ENCODE measurements at regions of chr2 and their contacts with region 1.

Region 1: GRCh38 chr2:43226558-43226954 is at the start of gene ZFP36L2:
- DNase-seq: peak; percentile 95 to 96
- ATAC-seq: peak; percentile 60 to 83 (median 74)
- H3K4me3 ChIP-seq: peak within 1 kb of the TSS; percentile 97
- H3K4me3 Mint-ChIP-seq: peak within 1 kb of the TSS; percentile 98
- H3K27ac ChIP-seq: peak within 1 kb of the TSS; percentile 97
- H3K27ac Mint-ChIP-seq: peak within 1 kb of the TSS; percentile 90 to 99
- H3K4me1 ChIP-seq: peaks cover 32% of the 10 kb centered on the region
- H3K4me1 Mint-ChIP-seq: peaks cover 44 to 50% of the 10 kb centered on the region in 2 donors
- H3K27me3 ChIP-seq: no peaks in the 10 kb centered on the region
- H3K27me3 Mint-ChIP-seq: no peaks in the 10 kb centered on the region
- CTCF ChIP-seq: no peak
- total RNA-seq, gene ZFP36L2: 376 to 428 (median 418) TPM

Region 2: GRCh38 chr2:42810121-42810970 is 416.2 kb before region 1 on chr2:
- intact Hi-C with region 1: loop called (anchors 5 kb)
- DNase-seq: peak; percentile 98 to 99
- ATAC-seq: peak; percentile 78 to 92 (median 83)
- H3K4me3 ChIP-seq: peak overlapping the region; percentile 80
- H3K4me3 Mint-ChIP-seq: peak overlapping the region; percentile 96
- H3K27ac ChIP-seq: peak overlapping the region; percentile 95
- H3K27ac Mint-ChIP-seq: peak overlapping the region; percentile 98 to 99
- H3K4me1 ChIP-seq: peaks cover 21% of the 10 kb centered on the region
- H3K4me1 Mint-ChIP-seq: peaks cover 28 to 30% of the 10 kb centered on the region in 2 donors
- H3K27me3 ChIP-seq: no peaks in the 10 kb centered on the region
- H3K27me3 Mint-ChIP-seq: peaks cover 3 to 5% of the 10 kb centered on the region in 2 donors
- CTCF ChIP-seq: peak; percentile 7

Region 3: GRCh38 chr2:42964439-42965083 is 262.0 kb before region 1 on chr2:
- intact Hi-C with region 1: loop called (anchors 5 kb)
- DNase-seq: no peak
- ATAC-seq: peak in 1 of 3 donors; percentile 54
- H3K4me3 ChIP-seq: no peak overlapping the region
- H3K4me3 Mint-ChIP-seq: no peak overlapping the region
- H3K27ac ChIP-seq: no peak overlapping the region
- H3K27ac Mint-ChIP-seq: no peak overlapping the region
- H3K4me1 ChIP-seq: peaks cover 60% of the 10 kb centered on the region
- H3K4me1 Mint-ChIP-seq: peaks cover 22 to 45% of the 10 kb centered on the region in 2 donors
- H3K27me3 ChIP-seq: no peaks in the 10 kb centered on the region
- H3K27me3 Mint-ChIP-seq: no peaks in the 10 kb centered on the region
- CTCF ChIP-seq: no peak

Region 4: GRCh38 chr2:43121580-43122314 is 104.8 kb before region 1 on chr2:
- intact Hi-C with region 1: no loop called
- DNase-seq: no peak
- ATAC-seq: no peak
- H3K4me3 ChIP-seq: no peak overlapping the region
- H3K4me3 Mint-ChIP-seq: no peak overlapping the region
- H3K27ac ChIP-seq: no peak overlapping the region
- H3K27ac Mint-ChIP-seq: no peak overlapping the region
- H3K4me1 ChIP-seq: peaks cover 14% of the 10 kb centered on the region
- H3K4me1 Mint-ChIP-seq: peaks cover 5 to 12% of the 10 kb centered on the region in 2 donors
- H3K27me3 ChIP-seq: no peaks in the 10 kb centered on the region
- H3K27me3 Mint-ChIP-seq: no peaks in the 10 kb centered on the region
- CTCF ChIP-seq: no peak

Region 5: DNA sequence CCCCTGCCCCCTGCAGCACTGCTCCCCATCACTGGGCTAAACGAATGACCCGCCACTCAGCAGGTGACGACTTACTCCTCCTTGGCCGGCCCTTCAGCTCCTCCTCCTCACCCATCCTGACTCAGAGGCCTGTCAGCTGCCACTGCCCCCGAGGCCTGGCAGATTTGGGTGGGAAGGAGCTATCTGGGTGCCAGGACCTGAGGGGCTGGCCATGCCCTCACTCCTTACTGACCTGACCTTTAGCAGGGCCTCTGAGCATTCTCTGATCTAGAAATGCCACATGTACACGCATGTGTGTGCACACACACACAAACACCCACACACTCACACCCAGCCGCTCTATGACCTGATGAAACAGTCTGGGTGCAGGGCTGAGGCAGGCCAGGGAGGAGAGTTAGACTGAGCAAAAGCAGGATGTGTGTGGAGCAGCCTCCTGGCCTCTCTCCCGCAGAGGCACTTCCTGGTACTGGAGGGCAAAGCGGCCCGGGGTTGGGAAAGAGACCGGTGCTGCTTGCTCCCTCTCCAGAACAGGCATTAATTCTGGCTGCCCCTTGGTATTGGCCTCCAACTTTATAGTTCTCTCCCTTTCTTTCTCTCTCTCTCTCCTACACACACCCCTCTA is 68.2 kb before region 1 on chr2:
- intact Hi-C with region 1: loop called (anchors 2 kb)
- DNase-seq: peak; percentile 39 to 80
- ATAC-seq: peak; percentile 33 to 53 (median 41)
- H3K4me3 ChIP-seq: no peak overlapping the region
- H3K4me3 Mint-ChIP-seq: peak overlapping the region; percentile 64
- H3K27ac ChIP-seq: peak overlapping the region; percentile 97
- H3K27ac Mint-ChIP-seq: peak overlapping the region; percentile 95 to 97
- H3K4me1 ChIP-seq: peaks cover 76% of the 10 kb centered on the region
- H3K4me1 Mint-ChIP-seq: peaks cover 27 to 55% of the 10 kb centered on the region in 2 donors
- H3K27me3 ChIP-seq: no peaks in the 10 kb centered on the region
- H3K27me3 Mint-ChIP-seq: no peaks in the 10 kb centered on the region
- CTCF ChIP-seq: no peak

Region 6: DNA sequence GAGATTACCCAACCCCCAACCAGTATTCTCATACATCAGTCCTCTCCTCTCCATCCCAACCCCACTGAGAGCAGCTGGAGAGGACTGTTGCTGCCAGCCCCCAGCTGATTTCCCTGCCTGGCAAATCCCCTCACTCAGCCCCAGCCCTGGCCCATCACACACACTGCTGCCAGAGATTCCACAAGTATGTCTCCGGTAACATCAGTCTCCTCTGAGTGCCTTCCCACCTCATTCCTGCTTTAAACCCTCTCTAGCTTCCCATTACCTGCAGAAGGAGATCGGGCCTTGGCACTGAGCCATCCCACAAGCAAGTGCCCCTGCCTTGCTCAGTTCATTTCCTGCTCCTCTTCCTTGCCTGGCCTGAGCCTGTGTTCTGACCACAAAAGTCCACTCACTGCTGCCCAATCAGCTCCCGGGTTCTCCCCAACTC is 50.4 kb after region 1 on chr2:
- intact Hi-C with region 1: no loop called
- DNase-seq: no peak
- ATAC-seq: no peak
- H3K4me3 ChIP-seq: no peak overlapping the region
- H3K4me3 Mint-ChIP-seq: no peak overlapping the region
- H3K27ac ChIP-seq: no peak overlapping the region
- H3K27ac Mint-ChIP-seq: peak overlapping the region in 1 of 2 donors; percentile 12
- H3K4me1 ChIP-seq: no peaks in the 10 kb centered on the region
- H3K4me1 Mint-ChIP-seq: peaks cover 0 to 7% of the 10 kb centered on the region in 2 donors
- H3K27me3 ChIP-seq: no peaks in the 10 kb centered on the region
- H3K27me3 Mint-ChIP-seq: no peaks in the 10 kb centered on the region
- CTCF ChIP-seq: no peak

Region 7: GRCh38 chr2:43484323-43484930 is 257.9 kb after region 1 on chr2:
- intact Hi-C with region 1: loop called (anchors 5 kb)
- DNase-seq: peak in 1 of 2 donors; percentile 82
- ATAC-seq: peak in 2 of 3 donors; percentile 44 to 63
- H3K4me3 ChIP-seq: no peak overlapping the region
- H3K4me3 Mint-ChIP-seq: no peak overlapping the region
- H3K27ac ChIP-seq: no peak overlapping the region
- H3K27ac Mint-ChIP-seq: no peak overlapping the region
- H3K4me1 ChIP-seq: no peaks in the 10 kb centered on the region
- H3K4me1 Mint-ChIP-seq: peaks cover 9% of the 10 kb centered on the region in 2 donors
- H3K27me3 ChIP-seq: no peaks in the 10 kb centered on the region
- H3K27me3 Mint-ChIP-seq: no peaks in the 10 kb centered on the region
- CTCF ChIP-seq: peak; percentile 84